CD4-positive, alpha-beta memory T cell (primary cell): ENCODE measurements at regions of chr14 and their contacts with region 1.

Region 1: GRCh38 chr14:77040059-77040740 is 11.7 kb upstream of the IRF2BPL start:
- DNase-seq: peak; percentile 96 to 99 (median 99)
- H3K4me3 ChIP-seq: peak overlapping the region; percentile 8 to 53
- H3K4me3 Mint-ChIP-seq: peak overlapping the region; percentile 84 to 93 (median 86)
- H3K27ac ChIP-seq: peak overlapping the region; percentile 95
- H3K27ac Mint-ChIP-seq: peak overlapping the region; percentile 97 to 100 (median 99)
- H3K4me1 ChIP-seq: peaks cover 94% of the 10 kb centered on the region
- H3K4me1 Mint-ChIP-seq: peaks cover 50 to 97% (median 84%) of the 10 kb centered on the region in 4 donors
- H3K27me3 ChIP-seq: no peaks in the 10 kb centered on the region
- H3K27me3 Mint-ChIP-seq: no peaks in the 10 kb centered on the region

Region 2: GRCh38 chr14:76956316-76957090 is 83.7 kb before region 1 on chr14:
- CTCF ChIA-PET with region 1: interaction called, 7 read pairs
- POLR2A ChIA-PET with region 1: interaction called, 64 read pairs
- intact Hi-C with region 1: loop called (anchors 1 kb)
- DNase-seq: peak; percentile 83 to 97 (median 85)
- H3K4me3 ChIP-seq: peak overlapping the region; percentile 61 to 64
- H3K4me3 Mint-ChIP-seq: peak overlapping the region; percentile 81 to 96 (median 88)
- H3K27ac ChIP-seq: peak overlapping the region; percentile 94
- H3K27ac Mint-ChIP-seq: peak overlapping the region; percentile 87 to 99 (median 98)
- H3K4me1 ChIP-seq: peaks cover 72% of the 10 kb centered on the region
- H3K4me1 Mint-ChIP-seq: peaks cover 37 to 75% (median 53%) of the 10 kb centered on the region in 4 donors
- H3K27me3 ChIP-seq: no peaks in the 10 kb centered on the region
- H3K27me3 Mint-ChIP-seq: no peaks in the 10 kb centered on the region

Region 3: GRCh38 chr14:77014004-77014604 is 26.1 kb before region 1 on chr14:
- CTCF ChIA-PET with region 1: interaction called, 4 read pairs
- POLR2A ChIA-PET with region 1: interaction called, 18 read pairs
- intact Hi-C with region 1: no loop called
- DNase-seq: no peak
- H3K4me3 ChIP-seq: no peak overlapping the region
- H3K4me3 Mint-ChIP-seq: no peak overlapping the region
- H3K27ac ChIP-seq: no peak overlapping the region
- H3K27ac Mint-ChIP-seq: peak overlapping the region in 1 of 7 donors; percentile 47
- H3K4me1 ChIP-seq: peaks cover 15% of the 10 kb centered on the region
- H3K4me1 Mint-ChIP-seq: peaks cover 16 to 25% (median 19%) of the 10 kb centered on the region in 4 donors
- H3K27me3 ChIP-seq: no peaks in the 10 kb centered on the region
- H3K27me3 Mint-ChIP-seq: no peaks in the 10 kb centered on the region

Region 4: DNA sequence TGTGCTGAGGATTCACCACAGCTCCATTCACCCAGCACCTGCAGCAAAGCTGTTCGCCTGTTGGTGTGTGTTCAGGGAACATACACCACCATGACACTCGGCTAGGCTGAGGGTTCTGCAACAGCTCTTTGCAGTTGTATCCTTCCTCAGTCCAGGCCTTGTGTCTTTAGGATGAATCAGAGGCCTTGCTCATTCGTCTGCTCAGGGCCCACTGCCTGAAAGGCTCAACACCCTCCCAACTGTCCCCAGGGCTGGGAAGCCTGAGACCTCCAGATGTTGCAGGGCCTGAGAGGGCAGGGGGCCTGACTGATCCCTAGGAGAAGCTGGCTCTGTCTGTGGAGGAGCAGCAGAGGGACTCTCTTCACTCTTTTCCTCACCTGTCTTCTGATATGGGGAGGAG is 90.2 kb after region 1 on chr14:
- CTCF ChIA-PET with region 1: no interaction called
- POLR2A ChIA-PET with region 1: no interaction called
- intact Hi-C with region 1: no loop called
- DNase-seq: no peak
- H3K4me3 ChIP-seq: no peak overlapping the region
- H3K4me3 Mint-ChIP-seq: no peak overlapping the region
- H3K27ac ChIP-seq: no peak overlapping the region
- H3K27ac Mint-ChIP-seq: no peak overlapping the region
- H3K4me1 ChIP-seq: peaks cover 3% of the 10 kb centered on the region
- H3K4me1 Mint-ChIP-seq: peaks cover 2 to 14% (median 5%) of the 10 kb centered on the region in 4 donors
- H3K27me3 ChIP-seq: peaks cover 3% of the 10 kb centered on the region
- H3K27me3 Mint-ChIP-seq: peaks cover 31 to 52% of the 10 kb centered on the region in 2 donors